Calu3 (cell line): ENCODE measurements at regions of chr3 and their contacts with region 1.

Region 1: DNA sequence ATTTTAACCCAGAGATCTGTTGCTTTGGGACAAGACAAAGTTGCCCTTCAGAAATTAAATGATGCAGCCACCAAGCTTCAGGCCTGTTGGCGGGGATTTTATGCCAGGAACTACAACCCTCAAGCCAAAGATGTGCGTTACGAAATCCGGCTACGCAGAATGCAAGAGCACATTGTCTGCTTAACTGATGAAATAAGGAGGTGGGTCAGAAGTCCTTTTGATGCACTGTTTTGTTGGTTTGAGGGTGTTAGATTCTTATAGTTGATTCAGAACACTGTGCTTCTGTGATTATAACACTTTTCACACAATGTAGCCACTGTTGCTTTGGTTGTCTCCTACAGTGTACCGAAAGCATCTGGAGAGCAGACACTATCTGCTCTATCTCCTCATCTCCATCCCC is 20.8 kb upstream of the NXPE3 start:
- DNase-seq: no peak
- H3K4me3 Mint-ChIP-seq: no peak overlapping the region
- H3K27ac Mint-ChIP-seq: no peak overlapping the region
- H3K4me1 Mint-ChIP-seq: no peaks in the 10 kb centered on the region
- H3K27me3 Mint-ChIP-seq: no peaks in the 10 kb centered on the region
- CTCF ChIP-seq: no peak

Region 2: GRCh38 chr3:100149130-100149529 is 1609.1 kb before region 1 on chr3:
- CTCF ChIA-PET with region 1: interaction called, 10 read pairs
- intact Hi-C with region 1: no loop called
- DNase-seq: peak; percentile 1
- H3K4me3 Mint-ChIP-seq: no peak overlapping the region
- H3K27ac Mint-ChIP-seq: no peak overlapping the region
- H3K4me1 Mint-ChIP-seq: peaks cover 8% of the 10 kb centered on the region
- H3K27me3 Mint-ChIP-seq: no peaks in the 10 kb centered on the region
- CTCF ChIP-seq: no peak

Region 3: GRCh38 chr3:101744735-101745134 is 13.5 kb before region 1 on chr3:
- CTCF ChIA-PET with region 1: no interaction called
- intact Hi-C with region 1: no loop called
- DNase-seq: no peak
- H3K4me3 Mint-ChIP-seq: no peak overlapping the region
- H3K27ac Mint-ChIP-seq: no peak overlapping the region
- H3K4me1 Mint-ChIP-seq: no peaks in the 10 kb centered on the region
- H3K27me3 Mint-ChIP-seq: no peaks in the 10 kb centered on the region
- CTCF ChIP-seq: no peak